ENCODE measurements at regions of chr9 and their contacts with region 1.

Region 1: GRCh38 chr9:93095205-93096130 is 549 bp upstream of the CARD19 start:
- DNase-seq: peak; percentile 100
- ATAC-seq: peak; percentile 82 to 93 (median 84)
- H3K4me3 ChIP-seq: peak overlapping the region; percentile 63
- H3K4me3 Mint-ChIP-seq: peak overlapping the region; percentile 85
- H3K27ac ChIP-seq: peak overlapping the region; percentile 98
- H3K27ac Mint-ChIP-seq: peak overlapping the region; percentile 91 to 92
- H3K4me1 ChIP-seq: peaks cover 73% of the 10 kb centered on the region
- H3K4me1 Mint-ChIP-seq: peaks cover 28 to 51% of the 10 kb centered on the region in 2 donors
- H3K27me3 ChIP-seq: no peaks in the 10 kb centered on the region
- H3K27me3 Mint-ChIP-seq: no peaks in the 10 kb centered on the region
- CTCF ChIP-seq: no peak

Region 2: GRCh38 chr9:92969516-92970466 is 125.7 kb before region 1 on chr9:
- intact Hi-C with region 1: loop called (anchors 2 kb)
- DNase-seq: no peak
- ATAC-seq: no peak
- H3K4me3 ChIP-seq: no peak overlapping the region
- H3K4me3 Mint-ChIP-seq: peak overlapping the region; percentile 95
- H3K27ac ChIP-seq: peak overlapping the region; percentile 78
- H3K27ac Mint-ChIP-seq: peak overlapping the region; percentile 97
- H3K4me1 ChIP-seq: peaks cover 91% of the 10 kb centered on the region
- H3K4me1 Mint-ChIP-seq: peaks cover 95 to 98% of the 10 kb centered on the region in 2 donors
- H3K27me3 ChIP-seq: no peaks in the 10 kb centered on the region
- H3K27me3 Mint-ChIP-seq: no peaks in the 10 kb centered on the region
- CTCF ChIP-seq: no peak

Region 3: DNA sequence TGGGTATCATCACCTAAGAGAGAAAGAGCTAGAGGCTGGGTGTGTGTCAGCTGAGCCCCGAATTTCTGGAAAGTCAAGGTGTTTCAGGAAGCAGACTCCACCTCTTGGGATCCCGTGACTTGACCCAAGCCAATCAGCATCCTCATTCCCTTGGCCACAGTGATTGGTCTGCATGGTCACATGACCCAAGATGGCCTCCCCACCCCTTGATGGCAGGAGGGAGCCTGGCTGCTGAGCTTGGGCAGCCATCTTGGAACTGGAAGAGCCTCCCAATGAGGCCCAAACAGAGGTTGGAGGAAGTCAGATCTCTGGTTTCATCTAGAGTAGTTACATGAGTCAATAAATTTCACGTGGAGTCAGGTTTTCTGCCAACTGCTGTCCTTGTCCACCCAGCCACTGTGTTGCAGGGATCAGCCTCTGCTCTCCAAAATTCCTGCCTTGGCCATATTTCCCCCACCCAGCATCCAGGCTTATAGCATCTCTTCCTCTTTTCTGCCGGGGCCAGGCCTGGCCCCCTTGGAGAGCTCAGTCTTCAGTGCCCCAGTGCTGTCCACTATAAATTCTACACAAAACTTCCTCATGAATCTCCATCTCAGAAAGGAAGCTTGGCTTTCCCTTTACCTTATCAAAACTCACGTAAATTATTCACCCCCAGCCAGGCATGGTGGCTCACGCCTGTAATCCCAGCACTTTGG is 54.2 kb before region 1 on chr9:
- intact Hi-C with region 1: no loop called
- DNase-seq: no peak
- ATAC-seq: peak in 1 of 3 donors; percentile 38
- H3K4me3 ChIP-seq: no peak overlapping the region
- H3K4me3 Mint-ChIP-seq: no peak overlapping the region
- H3K27ac ChIP-seq: no peak overlapping the region
- H3K27ac Mint-ChIP-seq: peak overlapping the region in 1 of 2 donors; percentile 36
- H3K4me1 ChIP-seq: peaks cover 27% of the 10 kb centered on the region
- H3K4me1 Mint-ChIP-seq: peaks cover 20 to 43% of the 10 kb centered on the region in 2 donors
- H3K27me3 ChIP-seq: no peaks in the 10 kb centered on the region
- H3K27me3 Mint-ChIP-seq: peaks cover 19 to 23% of the 10 kb centered on the region in 2 donors
- CTCF ChIP-seq: no peak

Region 4: GRCh38 chr9:93082841-93083411 is 12.5 kb before region 1 on chr9:
- intact Hi-C with region 1: no loop called
- DNase-seq: no peak
- ATAC-seq: peak; percentile 41 to 49 (median 43)
- H3K4me3 ChIP-seq: no peak overlapping the region
- H3K4me3 Mint-ChIP-seq: no peak overlapping the region
- H3K27ac ChIP-seq: no peak overlapping the region
- H3K27ac Mint-ChIP-seq: no peak overlapping the region
- H3K4me1 ChIP-seq: peaks cover 26% of the 10 kb centered on the region
- H3K4me1 Mint-ChIP-seq: peaks cover 5 to 12% of the 10 kb centered on the region in 2 donors
- H3K27me3 ChIP-seq: peaks cover 6% of the 10 kb centered on the region
- H3K27me3 Mint-ChIP-seq: peaks cover 29 to 30% of the 10 kb centered on the region in 2 donors
- CTCF ChIP-seq: no peak

Region 5: GRCh38 chr9:93134015-93134739 is 38.7 kb after region 1 on chr9 and contains the start of gene NINJ1:
- intact Hi-C with region 1: loop called (anchors 5 kb)
- DNase-seq: peak; percentile 82 to 97
- ATAC-seq: peak; percentile 76 to 88 (median 79)
- H3K4me3 ChIP-seq: peak within 1 kb of the TSS; percentile 89
- H3K4me3 Mint-ChIP-seq: peak within 1 kb of the TSS; percentile 88
- H3K27ac ChIP-seq: peak within 1 kb of the TSS; percentile 89
- H3K27ac Mint-ChIP-seq: peak within 1 kb of the TSS; percentile 90 to 97
- H3K4me1 ChIP-seq: peaks cover 46% of the 10 kb centered on the region
- H3K4me1 Mint-ChIP-seq: peaks cover 27 to 31% of the 10 kb centered on the region in 2 donors
- H3K27me3 ChIP-seq: no peaks in the 10 kb centered on the region
- H3K27me3 Mint-ChIP-seq: peaks cover 0 to 5% of the 10 kb centered on the region in 2 donors
- CTCF ChIP-seq: no peak
- total RNA-seq, gene NINJ1: 87.3 to 121 (median 93.8) TPM

Region 6: DNA sequence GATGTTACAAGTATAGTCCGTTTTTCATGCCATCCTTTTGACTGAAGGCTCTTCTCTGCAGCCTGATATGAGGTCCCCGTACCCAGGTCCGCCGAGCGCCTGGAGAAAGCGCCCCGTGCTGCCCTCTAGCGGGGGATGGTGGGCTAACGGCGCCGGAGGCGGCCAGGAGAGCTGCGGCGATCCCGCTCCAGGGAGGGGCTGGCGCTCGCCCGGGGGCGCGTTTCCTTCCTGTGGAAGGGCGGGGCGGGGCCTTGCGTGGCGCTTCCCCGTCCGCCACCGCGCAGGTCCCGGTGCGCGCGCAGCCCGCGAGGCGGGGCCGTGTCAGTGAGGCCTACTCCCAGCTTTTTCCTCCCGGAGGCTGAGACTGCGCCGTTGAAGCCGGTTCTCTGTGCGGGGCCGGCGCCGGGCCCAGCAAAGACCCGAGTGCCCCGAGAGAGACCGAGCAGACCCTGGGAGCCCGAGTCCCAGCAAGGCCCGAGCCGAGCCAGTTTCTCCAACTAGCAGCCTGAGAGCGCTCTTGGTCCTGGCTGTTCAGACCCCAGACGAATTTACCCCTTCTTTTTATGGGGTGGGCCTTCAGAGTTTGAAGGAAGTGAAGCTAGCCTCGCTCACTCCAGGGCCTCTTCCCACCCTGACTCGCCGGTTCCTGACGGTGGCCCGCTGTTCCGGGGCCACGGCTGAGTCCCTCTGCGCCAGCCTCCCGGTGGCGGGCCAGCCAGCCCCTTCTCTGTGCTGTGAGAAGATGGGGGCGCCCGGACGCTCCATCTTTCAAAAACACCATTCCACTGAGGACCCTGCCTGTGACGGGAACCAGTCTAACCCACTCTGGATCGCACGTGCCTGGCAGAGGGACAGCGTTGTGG is 471.2 kb after region 1 on chr9:
- intact Hi-C with region 1: loop called (anchors 2 kb)
- DNase-seq: peak; percentile 98
- ATAC-seq: peak; percentile 98 to 100 (median 98)
- H3K4me3 ChIP-seq: peak overlapping the region; percentile 71
- H3K4me3 Mint-ChIP-seq: peak overlapping the region; percentile 90
- H3K27ac ChIP-seq: peak overlapping the region; percentile 94
- H3K27ac Mint-ChIP-seq: peak overlapping the region; percentile 87
- H3K4me1 ChIP-seq: peaks cover 17% of the 10 kb centered on the region
- H3K4me1 Mint-ChIP-seq: peaks cover 10 to 18% of the 10 kb centered on the region in 2 donors
- H3K27me3 ChIP-seq: no peaks in the 10 kb centered on the region
- H3K27me3 Mint-ChIP-seq: no peaks in the 10 kb centered on the region
- CTCF ChIP-seq: peak; percentile 88

Measured in natural killer cell (primary cell).